ENCODE measurements at regions of chr1 and their contacts with region 1.

Region 1: GRCh38 chr1:23930861-23931490 is 17.8 kb upstream of the CNR2 start:
- DNase-seq: peak; percentile 34
- H3K4me3 ChIP-seq: no peak overlapping the region
- H3K27ac ChIP-seq: peak overlapping the region; percentile 67
- H3K4me1 ChIP-seq: peaks cover 21% of the 10 kb centered on the region
- H3K27me3 ChIP-seq: no peaks in the 10 kb centered on the region
- CTCF ChIP-seq: no peak

Region 2: DNA sequence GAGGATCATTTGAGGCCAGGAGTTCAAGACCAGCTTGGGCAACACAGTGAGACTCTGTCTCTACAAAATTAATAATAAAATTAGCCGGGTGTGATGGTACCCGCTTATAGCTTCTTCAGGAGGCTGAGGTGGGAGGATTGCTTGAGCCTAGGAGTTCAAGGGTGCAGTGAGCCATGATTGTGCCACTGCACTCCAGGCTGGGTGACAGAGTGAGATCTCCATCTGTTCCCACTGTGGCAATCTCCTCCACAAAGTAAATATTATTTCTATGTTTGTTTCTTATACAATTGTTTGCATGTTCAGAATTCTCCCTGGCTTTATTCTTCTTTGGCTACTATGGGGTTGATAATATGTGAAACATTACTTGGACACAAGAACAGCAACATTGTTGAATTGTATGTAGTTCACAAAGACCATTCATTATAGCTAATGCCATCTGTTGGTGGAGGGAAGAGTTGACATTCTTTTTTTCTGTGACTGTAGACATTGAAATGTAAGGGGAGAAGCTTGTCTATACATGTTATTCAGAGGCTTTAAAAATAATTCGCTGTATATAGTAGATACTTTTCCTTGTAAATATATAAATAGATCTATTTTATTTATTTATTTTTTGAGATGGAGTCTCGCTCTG is 97.0 kb after region 1 on chr1:
- CTCF ChIA-PET with region 1: interaction called, 11 read pairs
- POLR2A ChIA-PET with region 1: no interaction called
- intact Hi-C with region 1: no loop called
- DNase-seq: peak; percentile 57
- H3K4me3 ChIP-seq: no peak overlapping the region
- H3K27ac ChIP-seq: no peak overlapping the region
- H3K4me1 ChIP-seq: no peaks in the 10 kb centered on the region
- H3K27me3 ChIP-seq: no peaks in the 10 kb centered on the region
- CTCF ChIP-seq: peak; percentile 70